HepG2 (cell line): ENCODE measurements at regions of chr7 and their contacts with region 1.

Region 1: GRCh38 chr7:152436111-152436930 is 518 bp upstream of the KMT2C start:
- DNase-seq: peak; percentile 81
- ATAC-seq: peak; percentile 70
- H3K4me3 ChIP-seq: peak overlapping the region; percentile 50 to 69 (median 64); a peak in 5 of 6 replicates
- H3K27ac ChIP-seq: peak overlapping the region; percentile 85
- H3K4me1 ChIP-seq: peaks cover 28% of the 10 kb centered on the region
- H3K27me3 ChIP-seq: no peaks in the 10 kb centered on the region
- CTCF ChIP-seq: no peak
- EP300 ChIP-seq: peak in 1 of 2 experiments; percentile 26; a peak in 1 of 4 replicates
- POLR2A ChIP-seq: peak; percentile 29 to 49; a peak in 1 of 4 replicates
- RAD21 ChIP-seq: peak; percentile 30

Region 2: DNA sequence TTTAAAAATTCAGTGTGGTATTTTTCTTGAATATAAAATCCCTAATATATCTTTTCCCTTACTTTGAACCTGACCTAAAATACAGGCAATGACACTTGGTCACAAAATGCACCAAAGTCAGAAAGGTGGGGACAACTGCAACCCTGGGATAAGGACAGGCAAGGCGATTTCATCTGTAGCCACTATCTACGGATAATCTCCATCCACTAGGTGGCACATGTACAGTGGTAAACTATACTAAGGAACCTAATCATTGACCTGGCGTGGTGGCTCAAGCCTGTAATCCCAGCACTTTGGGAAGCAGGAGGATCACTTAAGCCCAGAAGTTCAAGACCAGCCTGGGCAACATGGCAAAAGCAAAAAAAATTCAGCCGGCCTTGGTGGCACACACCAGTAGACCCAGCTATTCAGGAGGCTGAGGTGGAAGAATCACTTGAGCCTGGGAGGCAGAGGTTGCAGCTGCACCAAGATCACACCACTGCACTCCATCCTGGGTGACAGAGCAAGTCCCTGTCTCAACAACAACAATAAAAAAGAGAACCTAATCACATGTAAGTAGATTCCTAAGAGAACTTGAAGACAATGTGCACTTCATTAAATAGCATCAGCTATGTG is 99.5 kb before region 1 on chr7:
- CTCF ChIA-PET with region 1: no interaction called
- POLR2A ChIA-PET with region 1: no interaction called
- in situ Hi-C with region 1: no loop called
- intact Hi-C with region 1: loop called (anchors 5 kb)
- DNase-seq: peak; percentile 53
- ATAC-seq: peak; percentile 96
- H3K4me3 ChIP-seq: no peak overlapping the region
- H3K27ac ChIP-seq: no peak overlapping the region
- H3K4me1 ChIP-seq: peaks cover 11% of the 10 kb centered on the region
- H3K27me3 ChIP-seq: no peaks in the 10 kb centered on the region
- CTCF ChIP-seq: peak; percentile 75
- EP300 ChIP-seq: no peak
- POLR2A ChIP-seq: no peak
- RAD21 ChIP-seq: peak; percentile 45; the same call in 1 of the 2 replicates

Region 3: DNA sequence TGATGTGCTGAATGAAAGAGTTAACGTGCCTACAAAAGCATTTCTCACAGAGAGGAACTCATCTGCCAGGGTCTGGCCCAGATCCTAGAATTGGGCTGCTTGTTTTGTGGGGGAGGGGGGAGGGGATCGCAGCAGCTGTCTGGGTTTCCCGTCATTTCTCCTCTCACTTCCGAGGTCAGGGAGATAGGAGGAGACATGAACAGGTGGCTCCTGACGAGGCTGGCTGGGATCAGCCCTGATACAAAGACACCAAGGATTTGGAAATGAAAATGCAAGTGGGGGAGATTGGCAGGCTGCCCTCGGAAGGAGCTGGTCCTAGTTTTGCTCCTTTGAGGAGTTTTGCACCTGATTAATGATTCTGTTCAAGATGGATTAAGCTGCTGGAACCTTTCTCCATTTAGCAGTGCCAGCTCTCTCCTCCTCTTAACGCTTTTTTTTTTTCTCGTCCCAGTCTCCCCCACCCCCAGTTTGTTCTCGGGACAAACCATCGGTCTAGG is 86.3 kb after region 1 on chr7:
- CTCF ChIA-PET with region 1: no interaction called
- POLR2A ChIA-PET with region 1: no interaction called
- in situ Hi-C with region 1: no loop called
- intact Hi-C with region 1: no loop called
- DNase-seq: no peak
- ATAC-seq: no peak
- H3K4me3 ChIP-seq: peak overlapping the region in 2 of 3 experiments; percentile 33 to 34; a peak in 3 of 6 replicates
- H3K27ac ChIP-seq: no peak overlapping the region
- H3K4me1 ChIP-seq: peaks cover 17% of the 10 kb centered on the region
- H3K27me3 ChIP-seq: peaks cover 0 to 3% of the 10 kb centered on the region in 2 experiments; a peak in 1 of 5 replicates
- CTCF ChIP-seq: no peak
- EP300 ChIP-seq: no peak
- POLR2A ChIP-seq: no peak
- RAD21 ChIP-seq: no peak

Region 4: GRCh38 chr7:152709287-152710152 is 273.2 kb after region 1 on chr7:
- CTCF ChIA-PET with region 1: no interaction called
- POLR2A ChIA-PET with region 1: no interaction called
- in situ Hi-C with region 1: no loop called
- intact Hi-C with region 1: loop called (anchors 2 kb)
- DNase-seq: no peak
- ATAC-seq: no peak
- H3K4me3 ChIP-seq: no peak overlapping the region
- H3K27ac ChIP-seq: no peak overlapping the region
- H3K4me1 ChIP-seq: peaks cover 12% of the 10 kb centered on the region
- H3K27me3 ChIP-seq: no peaks in the 10 kb centered on the region
- CTCF ChIP-seq: no peak
- EP300 ChIP-seq: no peak
- POLR2A ChIP-seq: no peak
- RAD21 ChIP-seq: no peak